ENCODE measurements at regions of chr14 and their contacts with region 1.

Region 1: GRCh38 chr14:38867561-38868150 is 235.4 kb downstream of the SEC23A start:
- DNase-seq: peak; percentile 76
- H3K4me3 ChIP-seq: no peak overlapping the region
- H3K27ac ChIP-seq: no peak overlapping the region
- H3K4me1 ChIP-seq: no peaks in the 10 kb centered on the region
- CTCF ChIP-seq: peak; percentile 95

Region 2: DNA sequence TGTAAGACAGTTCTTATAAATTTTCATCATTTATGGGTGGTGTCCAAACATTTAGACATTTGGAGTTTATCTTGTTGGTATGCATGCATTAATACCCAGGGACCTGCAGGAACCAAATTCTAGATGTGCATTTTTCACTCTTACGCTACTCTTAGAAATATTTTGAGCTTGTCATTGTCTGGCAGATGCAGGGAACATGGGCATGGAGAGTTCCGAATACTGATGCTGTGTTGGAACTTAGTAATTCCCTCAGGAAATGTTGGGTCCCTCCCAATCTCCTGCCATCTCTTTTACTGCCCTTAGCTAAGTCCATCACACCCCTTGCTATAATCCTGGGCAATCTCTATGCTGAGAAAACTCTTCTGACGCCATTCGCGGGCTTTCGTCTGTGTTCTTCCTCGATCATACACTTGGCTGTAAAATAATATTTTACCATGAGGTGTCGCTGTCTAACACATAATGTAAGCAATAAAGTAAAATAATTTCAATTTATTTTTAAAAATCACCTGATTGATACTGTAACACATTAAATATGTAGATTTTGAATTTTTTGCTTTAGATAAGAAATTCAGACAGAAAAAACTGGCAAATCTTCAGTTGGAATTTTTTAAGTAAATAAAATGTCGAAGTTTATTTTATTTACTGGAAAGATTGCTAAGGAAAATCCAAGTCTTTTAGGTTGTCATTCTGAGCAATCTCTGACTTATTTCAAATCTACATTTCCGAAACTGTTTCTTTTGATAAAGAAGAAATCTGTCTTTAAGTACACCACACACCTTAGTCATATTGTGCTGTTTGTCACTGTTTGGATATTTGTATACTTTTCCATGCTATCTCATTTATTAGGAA is 964.1 kb before region 1 on chr14:
- CTCF ChIA-PET with region 1: no interaction called
- POLR2A ChIA-PET with region 1: no interaction called
- intact Hi-C with region 1: loop called (anchors 5 kb)
- DNase-seq: peak; percentile 74
- H3K4me3 ChIP-seq: no peak overlapping the region
- H3K27ac ChIP-seq: no peak overlapping the region
- H3K4me1 ChIP-seq: no peaks in the 10 kb centered on the region
- CTCF ChIP-seq: peak; percentile 94

Region 3: GRCh38 chr14:38721822-38722431 is 145.7 kb before region 1 on chr14:
- CTCF ChIA-PET with region 1: no interaction called
- POLR2A ChIA-PET with region 1: no interaction called
- intact Hi-C with region 1: loop called (anchors 5 kb)
- DNase-seq: peak; percentile 37
- H3K4me3 ChIP-seq: no peak overlapping the region
- H3K27ac ChIP-seq: no peak overlapping the region
- H3K4me1 ChIP-seq: peaks cover 5% of the 10 kb centered on the region
- CTCF ChIP-seq: peak; percentile 84